CD4-positive, alpha-beta T cell (primary cell): ENCODE measurements at regions of chr12 and their contacts with region 1.

Region 1: DNA sequence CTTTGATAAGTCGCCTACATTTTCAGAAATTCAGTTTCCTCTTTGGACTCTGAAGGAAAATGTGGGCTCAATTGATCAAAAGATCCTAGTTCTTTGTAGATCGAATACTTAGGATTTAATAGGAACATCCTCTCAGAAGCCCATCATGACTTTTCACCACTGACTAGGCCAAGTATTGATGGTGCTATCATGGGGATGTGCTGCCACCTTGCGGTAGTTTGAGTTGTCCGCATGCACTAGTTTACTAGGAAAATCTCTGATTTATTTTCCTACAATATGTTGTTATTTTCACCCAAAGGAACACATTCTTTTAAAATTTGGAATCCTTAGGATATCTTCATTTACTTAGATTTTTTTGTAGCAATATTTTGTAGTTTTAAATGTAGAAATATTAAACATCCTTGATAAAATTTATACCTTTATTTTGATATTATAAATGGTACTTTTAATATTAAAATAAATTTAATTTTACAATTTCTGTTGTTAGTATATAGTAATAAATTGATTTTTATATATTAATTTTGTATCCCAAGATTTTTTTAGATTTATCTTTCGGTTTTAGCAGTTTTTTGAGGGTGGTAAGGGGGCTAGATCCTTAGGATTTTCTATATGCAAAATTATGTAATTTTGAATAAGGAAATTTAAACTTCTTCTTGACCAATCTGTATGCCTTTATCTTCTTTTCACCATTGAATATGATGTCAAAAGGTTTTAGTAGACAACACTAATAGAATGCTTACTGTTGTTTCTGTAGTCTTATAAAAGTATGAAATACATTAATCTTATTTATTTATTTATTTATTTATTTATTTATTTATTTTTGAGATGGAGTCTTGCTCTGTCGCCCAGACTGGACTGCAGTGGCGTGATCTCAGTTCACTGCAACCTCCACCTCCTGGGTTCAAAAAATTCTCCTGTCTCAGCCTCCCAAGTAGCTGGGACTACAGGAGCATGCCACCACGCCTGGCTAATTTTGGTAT is 52.9 kb upstream of the OR9K2 start:
- DNase-seq: peak; percentile 67 to 91 (median 76)
- ATAC-seq: peak; percentile 49
- H3K4me3 ChIP-seq: no peak overlapping the region
- H3K4me3 Mint-ChIP-seq: no peak overlapping the region
- H3K27ac ChIP-seq: no peak overlapping the region
- H3K27ac Mint-ChIP-seq: no peak overlapping the region
- H3K4me1 ChIP-seq: no peaks in the 10 kb centered on the region
- H3K4me1 Mint-ChIP-seq: peaks cover 9% of the 10 kb centered on the region
- H3K27me3 ChIP-seq: peaks cover 0 to 14% of the 10 kb centered on the region in 2 experiments
- H3K27me3 Mint-ChIP-seq: peaks cover 40% of the 10 kb centered on the region
- CTCF ChIP-seq: peak; percentile 92

Region 2: DNA sequence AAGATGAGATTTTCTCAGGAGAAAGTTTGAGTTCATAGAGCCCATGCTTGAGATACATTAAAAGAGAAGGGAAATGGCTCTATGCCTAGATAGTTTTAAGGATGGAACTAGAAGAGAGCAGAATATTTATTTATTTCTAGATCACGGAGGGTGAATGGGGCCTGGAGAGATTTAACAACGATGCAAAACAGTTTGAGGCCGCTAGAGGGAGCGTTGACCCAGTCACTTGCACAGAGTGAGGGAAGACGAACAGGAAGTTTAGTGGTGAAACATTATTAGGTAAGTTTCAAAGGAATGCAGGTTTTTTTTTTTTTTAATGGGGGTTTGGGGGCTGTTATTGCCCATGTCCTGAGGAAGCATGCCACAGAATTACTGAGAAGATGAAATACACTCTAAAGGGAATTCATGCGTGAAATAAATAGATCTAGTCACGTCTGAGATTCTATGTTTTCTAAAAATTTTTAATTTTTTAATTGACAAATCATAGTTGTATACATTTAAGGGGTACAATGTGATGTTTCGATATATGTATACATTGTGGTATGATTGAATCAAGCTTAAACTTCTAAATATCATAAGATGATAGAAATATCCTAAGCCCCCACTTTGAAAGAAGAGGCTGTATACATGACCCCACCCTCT is 470.0 kb before region 1 on chr12:
- CTCF ChIA-PET with region 1: interaction called, 3 read pairs
- POLR2A ChIA-PET with region 1: no interaction called
- intact Hi-C with region 1: loop called in 1 of 2 experiments (anchors 10 kb)
- DNase-seq: peak; percentile 41 to 81 (median 56)
- ATAC-seq: peak; percentile 99
- H3K4me3 ChIP-seq: no peak overlapping the region
- H3K4me3 Mint-ChIP-seq: no peak overlapping the region
- H3K27ac ChIP-seq: no peak overlapping the region
- H3K27ac Mint-ChIP-seq: no peak overlapping the region
- H3K4me1 ChIP-seq: no peaks in the 10 kb centered on the region
- H3K4me1 Mint-ChIP-seq: peaks cover 8% of the 10 kb centered on the region
- H3K27me3 ChIP-seq: no peaks in the 10 kb centered on the region
- H3K27me3 Mint-ChIP-seq: peaks cover 15% of the 10 kb centered on the region
- CTCF ChIP-seq: peak; percentile 91

Region 3: GRCh38 chr12:54749191-54749818 is 324.0 kb before region 1 on chr12:
- CTCF ChIA-PET with region 1: interaction called, 27 read pairs
- POLR2A ChIA-PET with region 1: interaction called, 8 read pairs
- intact Hi-C with region 1: loop called (anchors 1 kb)
- DNase-seq: peak in 9 of 14 experiments; percentile 6 to 83 (median 28)
- ATAC-seq: peak; percentile 71
- H3K4me3 ChIP-seq: no peak overlapping the region
- H3K4me3 Mint-ChIP-seq: no peak overlapping the region
- H3K27ac ChIP-seq: no peak overlapping the region
- H3K27ac Mint-ChIP-seq: no peak overlapping the region
- H3K4me1 ChIP-seq: peaks cover 4% of the 10 kb centered on the region
- H3K4me1 Mint-ChIP-seq: peaks cover 18% of the 10 kb centered on the region
- H3K27me3 ChIP-seq: no peaks in the 10 kb centered on the region
- H3K27me3 Mint-ChIP-seq: no peaks in the 10 kb centered on the region
- CTCF ChIP-seq: peak; percentile 91

Region 4: GRCh38 chr12:54949073-54949711 is 124.1 kb before region 1 on chr12:
- CTCF ChIA-PET with region 1: no interaction called
- POLR2A ChIA-PET with region 1: no interaction called
- intact Hi-C with region 1: loop called in 1 of 2 experiments (anchors 5 kb)
- DNase-seq: no peak
- ATAC-seq: no peak
- H3K4me3 ChIP-seq: no peak overlapping the region
- H3K4me3 Mint-ChIP-seq: no peak overlapping the region
- H3K27ac ChIP-seq: no peak overlapping the region
- H3K27ac Mint-ChIP-seq: peak overlapping the region; percentile 86
- H3K4me1 ChIP-seq: no peaks in the 10 kb centered on the region
- H3K4me1 Mint-ChIP-seq: peaks cover 34% of the 10 kb centered on the region
- H3K27me3 ChIP-seq: no peaks in the 10 kb centered on the region
- H3K27me3 Mint-ChIP-seq: no peaks in the 10 kb centered on the region
- CTCF ChIP-seq: no peak

Region 5: GRCh38 chr12:54984658-54985376 is 88.5 kb before region 1 on chr12 and contains the start of gene TESPA1:
- CTCF ChIA-PET with region 1: interaction called, 182 read pairs
- POLR2A ChIA-PET with region 1: interaction called, 16 read pairs
- intact Hi-C with region 1: no loop called
- DNase-seq: peak; percentile 74 to 94 (median 84)
- ATAC-seq: peak; percentile 87
- H3K4me3 ChIP-seq: peak within 1 kb of the TSS; percentile 73
- H3K4me3 Mint-ChIP-seq: peak within 1 kb of the TSS; percentile 91
- H3K27ac ChIP-seq: peak within 1 kb of the TSS; percentile 88 to 97
- H3K27ac Mint-ChIP-seq: peak within 1 kb of the TSS; percentile 100
- H3K4me1 ChIP-seq: peaks cover 40% of the 10 kb centered on the region
- H3K4me1 Mint-ChIP-seq: peaks cover 98% of the 10 kb centered on the region
- H3K27me3 ChIP-seq: no peaks in the 10 kb centered on the region
- H3K27me3 Mint-ChIP-seq: no peaks in the 10 kb centered on the region
- CTCF ChIP-seq: no peak
- total RNA-seq, gene TESPA1: 96.3 to 98.2 TPM

Region 6: GRCh38 chr12:55780685-55781084 is 707.4 kb after region 1 on chr12:
- CTCF ChIA-PET with region 1: no interaction called
- POLR2A ChIA-PET with region 1: no interaction called
- intact Hi-C with region 1: no loop called
- DNase-seq: peak in 1 of 14 experiments; percentile 12
- ATAC-seq: no peak
- H3K4me3 ChIP-seq: no peak overlapping the region
- H3K4me3 Mint-ChIP-seq: no peak overlapping the region
- H3K27ac ChIP-seq: no peak overlapping the region
- H3K27ac Mint-ChIP-seq: no peak overlapping the region
- H3K4me1 ChIP-seq: peaks cover 4% of the 10 kb centered on the region
- H3K4me1 Mint-ChIP-seq: no peaks in the 10 kb centered on the region
- H3K27me3 ChIP-seq: no peaks in the 10 kb centered on the region
- H3K27me3 Mint-ChIP-seq: no peaks in the 10 kb centered on the region
- CTCF ChIP-seq: no peak